ENCODE measurements at regions of chr14 and their contacts with region 1.

Region 1: GRCh38 chr14:23478111-23478759 is 8.7 kb downstream of the NGDN start:
- DNase-seq: peak; percentile 25 to 26
- ATAC-seq: peak; percentile 58 to 60
- H3K4me3 ChIP-seq: no peak overlapping the region
- H3K27ac ChIP-seq: no peak overlapping the region
- H3K4me1 ChIP-seq: no peaks in the 10 kb centered on the region
- H3K27me3 ChIP-seq: no peaks in the 10 kb centered on the region
- CTCF ChIP-seq: peak; percentile 62 to 69 (median 67)
- POLR2A ChIP-seq: no peak

Region 2: GRCh38 chr14:23335623-23336022 is 142.6 kb before region 1 on chr14:
- in situ Hi-C with region 1: no loop called
- intact Hi-C with region 1: no loop called
- DNase-seq: no peak
- ATAC-seq: no peak
- H3K4me3 ChIP-seq: no peak overlapping the region
- H3K27ac ChIP-seq: no peak overlapping the region
- H3K4me1 ChIP-seq: no peaks in the 10 kb centered on the region
- H3K27me3 ChIP-seq: no peaks in the 10 kb centered on the region
- CTCF ChIP-seq: no peak
- POLR2A ChIP-seq: no peak

Region 3: GRCh38 chr14:23567192-23568020 is 89.2 kb after region 1 on chr14 and contains the start of gene AP1G2:
- in situ Hi-C with region 1: no loop called
- intact Hi-C with region 1: loop called (anchors 1 kb)
- DNase-seq: peak; percentile 54 to 55
- ATAC-seq: peak; percentile 44 to 57
- H3K4me3 ChIP-seq: peak within 1 kb of the TSS; percentile 64 to 83 (median 70)
- H3K27ac ChIP-seq: peak within 1 kb of the TSS; percentile 30 to 69 (median 62)
- H3K4me1 ChIP-seq: no peaks in the 10 kb centered on the region
- H3K27me3 ChIP-seq: no peaks in the 10 kb centered on the region
- CTCF ChIP-seq: no peak
- POLR2A ChIP-seq: no peak
- total RNA-seq, gene AP1G2: 1.5 to 31.5 (median 7.8) TPM

Region 4: DNA sequence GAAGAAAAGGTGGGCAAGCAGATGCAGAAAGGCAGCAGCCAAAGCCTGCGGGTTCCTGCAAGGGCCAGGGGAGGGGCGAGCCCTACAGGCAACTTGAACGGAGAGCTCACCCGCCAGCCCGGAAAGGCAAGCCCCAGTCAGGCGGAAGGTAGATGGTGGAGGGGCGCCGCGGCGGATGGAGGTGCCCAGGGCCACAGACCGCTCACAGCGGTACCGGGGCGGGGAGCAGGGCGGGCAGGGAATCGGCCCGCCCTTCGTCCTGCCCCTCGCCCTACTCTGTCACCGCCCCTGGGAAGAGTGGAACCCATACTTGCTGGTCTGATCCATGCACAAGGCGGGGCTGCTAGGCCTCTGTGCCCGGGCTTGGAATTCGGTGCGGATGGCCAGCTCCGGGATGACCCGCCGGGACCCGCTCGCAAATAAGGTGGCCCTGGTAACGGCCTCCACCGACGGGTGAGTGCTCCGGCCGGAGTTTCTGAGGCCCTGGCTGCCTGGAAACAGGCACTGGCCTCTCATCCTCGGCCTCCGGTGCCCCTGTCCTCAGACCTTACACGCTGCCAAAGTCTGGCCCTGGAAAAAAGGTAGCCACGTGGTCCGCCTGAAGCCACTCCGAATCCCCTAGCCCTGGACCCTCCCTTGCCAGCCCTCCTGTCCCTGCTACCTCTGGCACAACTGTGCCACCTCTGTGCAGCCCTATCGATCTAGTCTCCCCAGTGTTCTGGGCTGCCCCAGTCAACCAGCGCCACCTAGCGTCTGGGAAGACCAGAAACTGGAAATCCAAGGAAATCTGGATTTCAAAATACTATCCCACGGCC is 475.4 kb after region 1 on chr14 and contains the start of gene DHRS4:
- in situ Hi-C with region 1: no loop called
- intact Hi-C with region 1: loop called (anchors 10 kb)
- DNase-seq: peak; percentile 61 to 70
- ATAC-seq: peak; percentile 77 to 81
- H3K4me3 ChIP-seq: peak within 1 kb of the TSS; percentile 77 to 90 (median 83)
- H3K27ac ChIP-seq: peak within 1 kb of the TSS; percentile 88 to 93 (median 91)
- H3K4me1 ChIP-seq: peaks cover 13 to 38% of the 10 kb centered on the region in 2 donors
- H3K27me3 ChIP-seq: no peaks in the 10 kb centered on the region
- CTCF ChIP-seq: peak; percentile 77 to 94 (median 82)
- POLR2A ChIP-seq: peak; percentile 62 to 65
- total RNA-seq, gene DHRS4: 26.0 to 56.2 (median 44.1) TPM

Region 5: GRCh38 chr14:24442273-24443052 is 964.2 kb after region 1 on chr14 and contains the start of gene SDR39U1:
- in situ Hi-C with region 1: no loop called
- intact Hi-C with region 1: loop called (anchors 10 kb)
- DNase-seq: peak; percentile 96 to 97
- ATAC-seq: peak; percentile 99
- H3K4me3 ChIP-seq: peak within 1 kb of the TSS; percentile 71 to 89 (median 82)
- H3K27ac ChIP-seq: peak within 1 kb of the TSS; percentile 97 to 99 (median 98)
- H3K4me1 ChIP-seq: peaks cover 35 to 39% of the 10 kb centered on the region in 2 donors
- H3K27me3 ChIP-seq: peaks cover 0 to 9% (median 0%) of the 10 kb centered on the region in 3 donors
- CTCF ChIP-seq: no peak
- POLR2A ChIP-seq: peak; percentile 83 to 88
- total RNA-seq, gene SDR39U1: 21.7 to 51.4 (median 38.3) TPM